Posterior cingulate gyrus (tissue), 11 donors: ENCODE measurements at regions of chr14 and their contacts with region 1.

Region 1: DNA sequence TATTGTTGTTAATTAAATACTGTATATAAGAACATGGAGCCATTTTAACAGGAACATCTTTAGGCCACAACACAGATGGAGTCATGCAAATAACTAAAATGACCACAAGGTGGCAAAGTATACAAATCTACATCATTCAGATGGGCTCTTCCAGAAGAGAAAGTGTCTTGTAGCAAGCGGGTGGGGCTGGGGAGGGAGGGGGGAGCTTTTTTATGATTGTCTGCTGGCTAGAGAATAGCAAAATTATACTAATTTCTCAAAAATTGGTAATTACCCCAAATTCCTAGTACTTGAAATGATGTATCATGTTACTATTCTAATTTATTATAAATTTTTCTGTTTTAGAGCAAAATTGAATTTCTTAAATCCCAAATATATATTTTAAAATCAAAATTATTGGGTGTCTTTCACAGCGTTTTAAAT is 378.7 kb downstream of the PRKD1 start:
- DNase-seq: no peak

Region 2: GRCh38 chr14:29799464-29800095 is 250.6 kb after region 1 on chr14:
- intact Hi-C with region 1: loop called (anchors 2 kb)
- DNase-seq: no peak

Region 3: DNA sequence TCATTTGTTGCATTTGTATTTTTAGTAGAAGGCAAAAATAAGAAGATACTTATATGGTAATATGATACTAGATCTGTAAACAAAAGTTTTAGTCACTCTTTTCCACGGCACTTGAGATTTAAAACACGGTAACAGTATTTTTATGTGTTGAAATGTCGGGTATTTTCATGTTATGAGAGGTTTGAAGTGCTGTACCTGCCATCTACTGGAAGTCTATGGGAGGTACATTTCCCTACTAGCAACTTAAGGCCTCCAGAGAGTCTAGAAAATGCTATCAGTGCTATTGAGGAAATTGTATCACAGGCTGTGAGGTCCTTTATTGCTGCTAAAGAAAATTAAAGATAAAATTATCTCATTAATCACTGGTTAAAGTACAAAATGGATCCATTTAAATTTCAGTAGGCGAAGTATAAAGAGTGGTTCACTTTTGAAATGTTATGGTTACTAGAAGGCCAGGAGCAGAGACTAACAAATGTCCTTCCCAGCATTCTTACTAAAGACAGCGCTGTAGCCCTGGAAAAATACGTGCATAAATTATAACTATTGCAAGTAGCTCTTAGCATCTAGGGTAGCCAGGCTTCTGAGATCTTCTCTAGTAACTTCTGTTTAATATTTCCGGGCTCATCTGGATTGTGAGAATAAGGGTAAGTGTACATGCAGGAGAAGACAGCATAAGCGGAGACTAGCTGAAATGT is 456.3 kb after region 1 on chr14:
- intact Hi-C with region 1: loop called (anchors 1 kb)
- DNase-seq: no peak

Region 4: DNA sequence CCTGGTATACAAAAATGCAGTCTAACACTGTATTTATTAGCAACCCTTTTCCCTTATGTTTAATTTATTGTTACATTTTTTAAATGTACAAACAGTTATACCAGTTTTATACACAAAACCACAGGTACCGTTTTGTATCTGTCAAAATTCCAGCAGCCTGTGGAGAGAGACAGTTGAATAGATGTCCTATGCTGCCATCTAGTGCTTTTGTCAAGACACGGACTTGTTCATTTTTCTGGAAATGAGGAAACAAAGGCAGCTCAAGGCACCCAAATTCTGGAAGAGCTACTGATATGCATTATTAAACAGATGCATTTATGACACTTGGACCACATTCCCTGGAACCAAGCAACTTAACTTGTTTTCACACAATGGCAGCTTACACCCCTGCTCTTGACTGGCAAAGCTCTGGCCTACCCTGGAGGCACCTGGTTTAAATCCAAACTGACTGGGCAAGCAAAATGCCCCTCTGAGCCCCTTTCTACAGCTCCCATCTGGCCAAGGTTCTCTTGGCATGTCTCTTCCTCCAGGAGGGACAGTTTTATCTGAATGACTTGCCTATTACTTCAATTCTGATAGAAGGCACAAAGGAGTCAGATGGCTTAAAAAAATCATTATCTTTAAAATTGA is 665.6 kb after region 1 on chr14:
- intact Hi-C with region 1: loop called (anchors 5 kb)
- DNase-seq: peak in 3 of 10 donors; percentile 3 to 61 (median 8)

Region 5: GRCh38 chr14:30443368-30444007 is 894.5 kb after region 1 on chr14:
- intact Hi-C with region 1: loop called (anchors 2 kb)
- DNase-seq: no peak